Upper lobe of right lung (tissue), 1 donor: ENCODE measurements at regions of chr5 and their contacts with region 1.

Region 1: DNA sequence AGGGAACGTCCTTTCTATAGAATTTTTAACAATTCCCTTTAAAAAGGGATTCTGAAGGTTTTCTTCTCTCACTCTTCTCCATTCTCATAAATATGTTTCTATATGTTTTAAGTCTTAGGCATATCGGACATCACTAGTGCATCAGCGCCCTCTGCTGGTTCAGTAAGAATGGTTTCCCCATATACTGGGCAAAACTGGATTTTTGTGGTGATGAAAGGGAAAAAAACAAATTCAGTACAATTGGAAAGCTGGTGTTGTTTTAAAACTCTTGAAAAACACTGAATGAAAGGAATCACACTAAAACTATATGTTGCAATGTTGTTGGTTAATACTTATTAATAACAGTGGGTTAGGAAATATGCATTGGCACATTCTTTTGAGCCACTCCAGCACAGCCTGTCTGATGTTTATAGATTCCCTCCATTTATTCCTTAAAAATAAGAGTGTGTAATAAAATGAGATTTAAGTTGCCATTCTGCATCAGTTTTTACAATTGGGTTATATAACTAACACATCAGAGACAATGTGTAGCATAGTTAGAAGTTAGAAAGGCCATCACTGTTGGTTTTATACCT is 15.8 kb downstream of the CWC27 start:
- DNase-seq: no peak
- ATAC-seq: peak; percentile 84
- H3K4me3 ChIP-seq: no peak overlapping the region
- H3K27ac ChIP-seq: no peak overlapping the region
- H3K4me1 ChIP-seq: no peaks in the 10 kb centered on the region
- H3K27me3 ChIP-seq: no peaks in the 10 kb centered on the region
- CTCF ChIP-seq: peak; percentile 91

Region 2: GRCh38 chr5:64634997-64635686 is 149.4 kb before region 1 on chr5:
- intact Hi-C with region 1: loop called (anchors 10 kb)
- DNase-seq: no peak
- ATAC-seq: peak; percentile 61
- H3K4me3 ChIP-seq: no peak overlapping the region
- H3K27ac ChIP-seq: no peak overlapping the region
- H3K4me1 ChIP-seq: no peaks in the 10 kb centered on the region
- H3K27me3 ChIP-seq: no peaks in the 10 kb centered on the region
- CTCF ChIP-seq: peak; percentile 85